Upper lobe of right lung (tissue), 1 donor: ENCODE measurements at regions of chr1 and their contacts with region 1.

Region 1: DNA sequence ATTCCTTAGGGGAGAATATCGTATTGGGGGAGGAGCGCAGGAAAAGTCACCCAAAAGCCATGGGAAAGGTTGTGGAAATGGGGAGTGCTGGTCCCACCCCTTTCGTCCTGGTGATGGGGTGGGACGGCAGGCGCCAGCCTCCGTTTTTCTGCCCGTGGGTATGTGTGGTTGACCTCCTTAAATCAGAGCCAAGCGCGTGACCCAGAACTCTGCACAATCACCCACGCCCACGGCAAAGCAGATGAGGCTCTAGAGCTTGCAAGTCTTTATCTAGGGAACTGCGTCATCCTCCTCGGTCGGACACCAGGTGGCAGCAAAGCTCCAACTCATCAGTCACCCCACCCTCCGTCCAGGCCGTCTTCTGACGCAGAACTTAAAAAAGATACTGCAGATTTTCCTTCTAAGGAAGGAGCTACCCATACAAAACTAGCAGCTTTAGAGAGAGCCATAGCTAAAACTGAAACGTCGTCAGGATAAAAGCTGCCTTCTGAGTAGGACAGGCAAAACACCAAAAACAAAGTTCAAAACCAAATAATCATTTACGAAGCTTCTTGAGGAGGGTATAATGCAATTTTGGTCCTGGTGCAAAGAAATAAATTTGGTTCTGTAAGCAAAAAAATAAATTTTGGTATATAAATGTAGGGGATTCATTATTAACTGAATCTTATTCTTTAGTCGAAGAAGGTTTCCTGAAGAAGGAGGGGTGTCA is 62.0 kb downstream of the TBX19 start:
- DNase-seq: peak; percentile 91
- ATAC-seq: peak; percentile 99
- H3K4me3 ChIP-seq: peak overlapping the region; percentile 7
- H3K27ac ChIP-seq: no peak overlapping the region
- H3K4me1 ChIP-seq: peaks cover 10% of the 10 kb centered on the region
- H3K27me3 ChIP-seq: no peaks in the 10 kb centered on the region
- CTCF ChIP-seq: peak; percentile 85

Region 2: DNA sequence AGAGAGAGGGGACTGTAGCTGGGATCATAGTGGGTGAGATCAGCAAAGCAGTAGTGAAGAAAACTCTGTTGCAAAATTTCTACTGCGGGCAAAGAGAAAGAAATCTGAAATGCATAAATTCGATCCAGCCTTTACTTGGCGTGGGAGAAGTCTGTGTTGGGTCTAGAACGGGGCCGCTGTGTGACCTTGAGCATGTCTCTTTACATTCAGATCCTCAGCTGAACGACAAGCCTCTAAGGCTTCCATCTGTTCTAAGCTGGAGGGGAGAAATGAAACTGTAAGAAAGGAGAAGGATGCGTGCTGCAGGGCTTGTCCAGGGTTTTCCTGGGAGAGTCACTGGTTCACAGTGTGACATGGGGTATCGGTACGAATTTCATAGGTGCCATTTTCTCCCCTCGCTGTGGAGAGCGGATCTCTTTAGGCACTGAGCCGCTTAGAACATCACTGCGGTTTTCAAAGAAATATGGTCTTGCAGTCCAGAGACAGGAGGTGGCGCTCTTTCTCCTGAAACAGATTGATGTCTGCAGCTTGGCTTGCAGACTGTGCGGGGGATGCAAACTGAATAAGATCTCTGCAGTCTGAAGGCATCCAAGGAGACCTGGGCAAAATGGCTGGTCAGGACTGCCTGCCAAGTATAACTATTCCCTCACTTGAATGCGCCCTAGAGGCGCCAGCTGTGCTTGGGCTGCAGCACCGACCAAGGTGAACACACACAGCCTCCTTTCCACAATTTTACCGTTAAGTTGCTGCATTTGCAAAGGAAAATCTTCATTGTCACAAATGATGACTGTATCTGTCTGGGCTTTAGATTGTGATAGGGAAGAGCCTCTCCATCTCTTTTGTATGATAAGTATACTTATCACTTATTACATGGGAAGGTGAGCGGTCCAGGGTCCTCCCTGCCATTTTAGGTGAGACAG is 97.0 kb after region 1 on chr1:
- intact Hi-C with region 1: loop called (anchors 10 kb)
- DNase-seq: peak; percentile 66
- ATAC-seq: peak; percentile 90
- H3K4me3 ChIP-seq: peak overlapping the region; percentile 19
- H3K27ac ChIP-seq: peak overlapping the region; percentile 47
- H3K4me1 ChIP-seq: peaks cover 3% of the 10 kb centered on the region
- H3K27me3 ChIP-seq: no peaks in the 10 kb centered on the region
- CTCF ChIP-seq: peak; percentile 77